AG04449 (cell line): ENCODE measurements at regions of chr12 and their contacts with region 1.

Region 1: GRCh38 chr12:74415633-74416032 is 122.0 kb upstream of the ATXN7L3B start:
- DNase-seq: no peak
- H3K4me3 ChIP-seq: no peak overlapping the region
- CTCF ChIP-seq: peak; percentile 39

Region 2: GRCh38 chr12:74021937-74022336 is 393.7 kb before region 1 on chr12:
- CTCF ChIA-PET with region 1: interaction called, 10 read pairs
- POLR2A ChIA-PET with region 1: no interaction called
- DNase-seq: no peak
- H3K4me3 ChIP-seq: no peak overlapping the region
- CTCF ChIP-seq: peak; percentile 63

Region 3: GRCh38 chr12:74328616-74329015 is 87.0 kb before region 1 on chr12:
- CTCF ChIA-PET with region 1: no interaction called
- POLR2A ChIA-PET with region 1: no interaction called
- DNase-seq: no peak
- H3K4me3 ChIP-seq: no peak overlapping the region
- CTCF ChIP-seq: no peak